CD4-positive, alpha-beta memory T cell (primary cell): ENCODE measurements at regions of chr5 and their contacts with region 1.

Region 1: GRCh38 chr5:172006321-172007174 is at the start of gene FBXW11:
- DNase-seq: peak; percentile 93 to 98 (median 94)
- H3K4me3 ChIP-seq: peak within 1 kb of the TSS; percentile 93 to 97
- H3K4me3 Mint-ChIP-seq: peak within 1 kb of the TSS; percentile 91 to 99 (median 97)
- H3K27ac ChIP-seq: peak within 1 kb of the TSS; percentile 93
- H3K27ac Mint-ChIP-seq: peak within 1 kb of the TSS; percentile 93 to 99 (median 98)
- H3K4me1 ChIP-seq: peaks cover 53% of the 10 kb centered on the region
- H3K4me1 Mint-ChIP-seq: peaks cover 32 to 56% (median 46%) of the 10 kb centered on the region in 4 donors
- H3K27me3 ChIP-seq: no peaks in the 10 kb centered on the region
- H3K27me3 Mint-ChIP-seq: no peaks in the 10 kb centered on the region
- total RNA-seq, gene FBXW11: 41.7 to 43.4 TPM

Region 2: GRCh38 chr5:171797543-171797942 is 209.0 kb before region 1 on chr5:
- CTCF ChIA-PET with region 1: no interaction called
- POLR2A ChIA-PET with region 1: no interaction called
- intact Hi-C with region 1: no loop called
- DNase-seq: no peak
- H3K4me3 ChIP-seq: no peak overlapping the region
- H3K4me3 Mint-ChIP-seq: no peak overlapping the region
- H3K27ac ChIP-seq: no peak overlapping the region
- H3K27ac Mint-ChIP-seq: no peak overlapping the region
- H3K4me1 ChIP-seq: no peaks in the 10 kb centered on the region
- H3K4me1 Mint-ChIP-seq: no peaks in the 10 kb centered on the region
- H3K27me3 ChIP-seq: no peaks in the 10 kb centered on the region
- H3K27me3 Mint-ChIP-seq: peaks cover 1 to 3% of the 10 kb centered on the region in 2 donors

Region 3: GRCh38 chr5:171907725-171908343 is 98.7 kb before region 1 on chr5:
- CTCF ChIA-PET with region 1: interaction called, 36 read pairs
- POLR2A ChIA-PET with region 1: interaction called, 11 read pairs
- intact Hi-C with region 1: no loop called
- DNase-seq: peak; percentile 43 to 52 (median 45)
- H3K4me3 ChIP-seq: no peak overlapping the region
- H3K4me3 Mint-ChIP-seq: no peak overlapping the region
- H3K27ac ChIP-seq: no peak overlapping the region
- H3K27ac Mint-ChIP-seq: peak overlapping the region in 2 of 7 donors; percentile 4 to 35
- H3K4me1 ChIP-seq: peaks cover 38% of the 10 kb centered on the region
- H3K4me1 Mint-ChIP-seq: peaks cover 34 to 47% (median 41%) of the 10 kb centered on the region in 4 donors
- H3K27me3 ChIP-seq: no peaks in the 10 kb centered on the region
- H3K27me3 Mint-ChIP-seq: no peaks in the 10 kb centered on the region

Region 4: DNA sequence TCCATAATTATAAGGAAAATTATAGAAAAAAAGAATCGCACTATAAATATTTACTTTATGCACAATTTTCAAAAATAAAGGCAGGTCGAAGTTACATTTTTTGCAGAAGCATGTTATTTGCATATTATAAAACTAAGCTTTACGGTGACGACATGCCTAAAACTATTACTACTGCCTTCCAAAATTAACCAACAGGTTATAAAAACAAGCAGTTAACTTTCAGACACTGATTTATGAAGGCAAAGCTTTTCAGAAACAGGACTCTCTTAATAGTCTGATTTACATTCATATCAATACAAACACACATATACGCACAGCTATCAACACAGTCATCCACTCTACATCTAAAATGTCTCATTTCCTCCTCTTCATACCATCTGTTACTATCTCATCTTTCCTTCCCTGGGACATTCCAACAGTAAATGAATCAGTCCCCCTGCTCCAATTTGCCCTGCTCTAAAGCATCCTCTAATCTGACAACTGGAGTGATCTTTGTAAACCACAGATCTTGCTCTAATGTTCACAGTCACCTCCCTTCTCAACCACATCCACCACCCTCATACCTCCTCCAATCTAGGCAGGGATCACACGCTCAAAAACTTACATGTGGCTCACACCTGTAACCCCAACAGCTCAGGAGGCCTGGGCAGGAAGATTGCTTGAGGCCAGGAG is 21.7 kb before region 1 on chr5:
- CTCF ChIA-PET with region 1: interaction called, 6 read pairs
- POLR2A ChIA-PET with region 1: interaction called, 19 read pairs
- intact Hi-C with region 1: no loop called
- DNase-seq: peak; percentile 30 to 61 (median 50)
- H3K4me3 ChIP-seq: no peak overlapping the region
- H3K4me3 Mint-ChIP-seq: peak overlapping the region in 1 of 8 donors; percentile 3
- H3K27ac ChIP-seq: no peak overlapping the region
- H3K27ac Mint-ChIP-seq: peak overlapping the region in 5 of 7 donors; percentile 0 to 70 (median 19)
- H3K4me1 ChIP-seq: peaks cover 27% of the 10 kb centered on the region
- H3K4me1 Mint-ChIP-seq: peaks cover 25 to 51% (median 41%) of the 10 kb centered on the region in 4 donors
- H3K27me3 ChIP-seq: no peaks in the 10 kb centered on the region
- H3K27me3 Mint-ChIP-seq: no peaks in the 10 kb centered on the region

Region 5: GRCh38 chr5:172065501-172065990 is 59.0 kb after region 1 on chr5:
- CTCF ChIA-PET with region 1: interaction called, 26 read pairs
- POLR2A ChIA-PET with region 1: interaction called, 44 read pairs
- intact Hi-C with region 1: loop called (anchors 2 kb)
- DNase-seq: no peak
- H3K4me3 ChIP-seq: no peak overlapping the region
- H3K4me3 Mint-ChIP-seq: peak overlapping the region in 5 of 8 donors; percentile 4 to 86 (median 80)
- H3K27ac ChIP-seq: peak overlapping the region; percentile 62
- H3K27ac Mint-ChIP-seq: peak overlapping the region in 5 of 7 donors; percentile 29 to 98 (median 95)
- H3K4me1 ChIP-seq: peaks cover 68% of the 10 kb centered on the region
- H3K4me1 Mint-ChIP-seq: peaks cover 46 to 79% (median 60%) of the 10 kb centered on the region in 4 donors
- H3K27me3 ChIP-seq: no peaks in the 10 kb centered on the region
- H3K27me3 Mint-ChIP-seq: no peaks in the 10 kb centered on the region

Region 6: GRCh38 chr5:172114875-172115422 is 108.4 kb after region 1 on chr5:
- CTCF ChIA-PET with region 1: no interaction called
- POLR2A ChIA-PET with region 1: interaction called, 9 read pairs
- intact Hi-C with region 1: loop called (anchors 2 kb)
- DNase-seq: peak; percentile 56 to 83 (median 59)
- H3K4me3 ChIP-seq: peak overlapping the region in 1 of 2 donors; percentile 17
- H3K4me3 Mint-ChIP-seq: peak overlapping the region; percentile 69 to 92 (median 80)
- H3K27ac ChIP-seq: peak overlapping the region; percentile 74
- H3K27ac Mint-ChIP-seq: peak overlapping the region; percentile 94 to 100 (median 96)
- H3K4me1 ChIP-seq: peaks cover 93% of the 10 kb centered on the region
- H3K4me1 Mint-ChIP-seq: peaks cover 56 to 86% (median 72%) of the 10 kb centered on the region in 4 donors
- H3K27me3 ChIP-seq: no peaks in the 10 kb centered on the region
- H3K27me3 Mint-ChIP-seq: no peaks in the 10 kb centered on the region

Region 7: GRCh38 chr5:172533399-172534228 is 527.1 kb after region 1 on chr5:
- CTCF ChIA-PET with region 1: no interaction called
- POLR2A ChIA-PET with region 1: no interaction called
- intact Hi-C with region 1: no loop called
- DNase-seq: no peak
- H3K4me3 ChIP-seq: no peak overlapping the region
- H3K4me3 Mint-ChIP-seq: peak overlapping the region in 1 of 8 donors; percentile 16
- H3K27ac ChIP-seq: no peak overlapping the region
- H3K27ac Mint-ChIP-seq: no peak overlapping the region
- H3K4me1 ChIP-seq: no peaks in the 10 kb centered on the region
- H3K4me1 Mint-ChIP-seq: peaks cover 0 to 8% (median 0%) of the 10 kb centered on the region in 4 donors
- H3K27me3 ChIP-seq: no peaks in the 10 kb centered on the region
- H3K27me3 Mint-ChIP-seq: peaks cover 4 to 15% of the 10 kb centered on the region in 2 donors

Region 8: GRCh38 chr5:173057062-173057924 is 1050.7 kb after region 1 on chr5:
- CTCF ChIA-PET with region 1: no interaction called
- POLR2A ChIA-PET with region 1: interaction called, 11 read pairs
- intact Hi-C with region 1: no loop called
- DNase-seq: peak; percentile 97 to 99 (median 98)
- H3K4me3 ChIP-seq: peak overlapping the region; percentile 68 to 71
- H3K4me3 Mint-ChIP-seq: peak overlapping the region; percentile 92 to 98 (median 95)
- H3K27ac ChIP-seq: peak overlapping the region; percentile 95
- H3K27ac Mint-ChIP-seq: peak overlapping the region; percentile 90 to 96 (median 96)
- H3K4me1 ChIP-seq: peaks cover 50% of the 10 kb centered on the region
- H3K4me1 Mint-ChIP-seq: peaks cover 26 to 68% (median 47%) of the 10 kb centered on the region in 4 donors
- H3K27me3 ChIP-seq: no peaks in the 10 kb centered on the region
- H3K27me3 Mint-ChIP-seq: no peaks in the 10 kb centered on the region